ENCODE measurements at regions of chr19 and their contacts with region 1.

Region 1: DNA sequence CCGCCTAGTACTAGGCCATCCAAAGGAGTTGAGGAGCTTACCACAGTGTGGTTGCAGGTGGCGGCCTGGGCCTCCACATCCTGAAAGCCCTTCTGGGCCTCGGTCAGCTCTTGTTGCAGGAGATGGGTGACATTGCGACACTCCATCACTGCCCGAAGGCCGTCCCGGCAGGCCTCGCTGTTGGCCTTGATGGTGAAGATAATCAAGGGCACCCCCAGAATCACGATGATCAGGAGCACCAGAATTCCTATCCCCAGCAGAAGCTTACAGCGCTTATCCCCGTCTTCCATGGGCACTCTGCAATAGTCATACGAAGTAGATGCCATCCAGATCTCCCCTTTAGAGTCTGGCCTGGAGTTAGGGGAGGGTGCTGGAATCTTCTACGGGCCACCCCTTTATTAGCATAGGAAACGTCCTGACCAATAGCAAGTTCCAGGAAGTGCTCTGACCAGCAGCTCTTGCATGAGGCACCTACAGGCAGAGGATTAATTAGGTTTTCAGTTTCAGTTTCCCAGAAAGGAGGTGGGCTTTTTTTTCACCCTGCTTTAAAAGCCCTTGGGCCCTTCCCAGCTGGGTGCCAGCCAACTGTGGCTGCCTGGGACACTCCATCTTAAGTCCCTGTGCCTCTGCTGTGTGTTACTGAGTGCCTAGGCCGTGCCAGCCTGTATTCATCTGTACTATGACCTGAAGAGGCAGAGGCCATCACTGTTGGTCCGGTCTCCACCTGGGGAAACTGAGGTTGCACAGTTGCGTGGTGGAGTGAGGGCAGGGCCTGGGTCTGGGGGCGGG is at the start of gene BST2:
- DNase-seq: peak; percentile 58
- H3K4me3 Mint-ChIP-seq: peak within 1 kb of the TSS; percentile 85
- H3K27ac Mint-ChIP-seq: peak within 1 kb of the TSS; percentile 89
- H3K4me1 Mint-ChIP-seq: peaks cover 32% of the 10 kb centered on the region
- H3K27me3 Mint-ChIP-seq: no peaks in the 10 kb centered on the region
- total RNA-seq, gene BST2: 146 and 148 TPM in 2 replicates

Region 2: DNA sequence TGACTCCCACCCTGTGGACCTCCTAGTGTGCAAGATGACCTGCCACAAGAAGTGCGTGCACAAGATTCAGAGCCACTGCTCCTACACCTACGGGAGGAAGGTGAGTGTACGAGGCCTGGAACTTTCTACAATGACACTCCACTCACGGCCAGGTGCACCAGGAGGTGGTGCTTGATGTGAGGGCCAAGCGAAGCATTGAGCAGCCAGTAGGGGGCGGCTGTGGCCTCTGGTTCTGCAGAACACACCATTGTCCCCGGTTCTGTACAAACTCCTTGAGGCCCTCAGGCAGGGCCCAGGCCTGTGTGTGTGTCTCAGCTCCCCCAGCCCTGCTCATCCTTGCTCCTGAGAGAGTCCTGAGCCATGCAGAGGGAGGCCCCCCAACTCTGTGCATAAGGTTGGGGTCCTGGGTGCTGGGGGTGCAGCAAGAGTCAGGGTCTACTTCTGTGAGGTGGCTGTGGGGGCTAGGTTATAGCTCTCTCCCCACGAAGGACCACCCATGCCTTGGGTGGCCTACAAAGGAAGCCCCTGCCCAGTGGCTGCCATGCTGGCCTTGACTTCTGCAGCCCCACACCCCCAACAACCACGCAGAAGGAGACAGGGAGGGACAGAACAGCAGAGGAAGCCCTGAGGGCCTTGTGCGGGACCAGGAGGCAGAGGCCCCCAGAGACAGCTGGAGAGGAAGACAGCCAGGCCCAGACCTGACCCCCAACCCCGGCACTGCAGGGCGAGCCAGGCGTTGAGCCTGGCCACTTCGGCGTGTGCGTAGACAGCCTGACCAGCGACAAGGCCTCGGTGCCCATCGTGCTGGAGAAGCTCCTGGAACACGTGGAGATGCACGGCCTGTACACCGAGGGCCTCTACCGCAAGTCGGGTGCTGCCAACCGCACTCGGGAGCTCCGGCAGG is 200.0 kb before region 1 on chr19:
- intact Hi-C with region 1: no loop called
- DNase-seq: peak; percentile 44
- H3K4me3 Mint-ChIP-seq: no peak overlapping the region
- H3K27ac Mint-ChIP-seq: no peak overlapping the region
- H3K4me1 Mint-ChIP-seq: peaks cover 8% of the 10 kb centered on the region
- H3K27me3 Mint-ChIP-seq: no peaks in the 10 kb centered on the region

Region 3: GRCh38 chr19:17336872-17337722 is 68.3 kb before region 1 on chr19 and contains the start of gene GTPBP3:
- intact Hi-C with region 1: loop called (anchors 1 kb)
- DNase-seq: peak; percentile 95
- H3K4me3 Mint-ChIP-seq: peak within 1 kb of the TSS; percentile 87
- H3K27ac Mint-ChIP-seq: peak within 1 kb of the TSS; percentile 88
- H3K4me1 Mint-ChIP-seq: peaks cover 21% of the 10 kb centered on the region
- H3K27me3 Mint-ChIP-seq: peaks cover 2% of the 10 kb centered on the region
- total RNA-seq, gene GTPBP3: 64.2 and 72.0 TPM in 2 replicates

Region 4: GRCh38 chr19:17390665-17391370 is 14.6 kb before region 1 on chr19:
- intact Hi-C with region 1: loop called (anchors 1 kb)
- DNase-seq: peak; percentile 88
- H3K4me3 Mint-ChIP-seq: peak overlapping the region; percentile 90
- H3K27ac Mint-ChIP-seq: peak overlapping the region; percentile 29
- H3K4me1 Mint-ChIP-seq: peaks cover 20% of the 10 kb centered on the region
- H3K27me3 Mint-ChIP-seq: peaks cover 21% of the 10 kb centered on the region

Region 5: DNA sequence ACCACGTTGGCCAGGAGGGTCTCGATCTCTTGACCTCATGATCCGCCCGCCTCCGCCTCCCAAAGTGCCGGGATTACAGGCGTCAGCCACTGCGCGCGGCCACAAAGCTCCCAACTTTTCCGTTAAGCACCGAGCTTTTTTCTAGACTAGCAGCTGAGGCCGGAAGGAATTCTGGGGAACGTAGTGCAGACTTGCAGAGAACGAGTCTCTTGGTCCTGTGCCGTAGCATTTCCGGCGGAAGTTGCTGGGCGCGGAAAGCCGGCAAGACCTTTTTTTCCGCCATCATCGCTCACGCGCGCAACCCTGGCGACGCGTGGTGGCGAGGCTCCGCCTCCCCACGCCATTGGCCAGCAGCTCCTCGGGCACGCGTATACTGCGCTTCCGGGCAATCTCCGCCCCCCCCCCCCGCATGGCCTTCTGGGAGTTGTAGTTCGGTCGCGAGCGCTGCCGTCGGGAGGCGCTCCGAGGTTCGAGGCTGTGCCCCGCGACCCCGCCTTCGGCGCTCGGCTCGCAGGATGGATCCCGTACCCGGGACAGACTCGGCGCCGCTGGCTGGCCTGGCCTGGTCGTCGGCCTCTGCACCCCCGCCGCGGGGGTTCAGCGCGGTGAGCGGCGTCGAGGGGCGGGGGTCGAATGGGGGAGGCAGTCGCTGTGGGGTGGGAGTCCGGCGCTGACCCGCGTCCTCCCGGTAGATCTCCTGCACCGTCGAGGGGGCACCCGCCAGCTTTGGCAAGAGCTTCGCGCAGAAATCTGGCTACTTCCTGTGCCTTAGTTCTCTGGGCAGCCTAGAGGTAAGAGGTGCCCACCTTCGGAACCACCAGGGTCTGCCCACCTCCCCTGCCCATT is 14.4 kb after region 1 on chr19 and contains the start of gene MVB12A:
- intact Hi-C with region 1: loop called (anchors 1 kb)
- DNase-seq: peak; percentile 95
- H3K4me3 Mint-ChIP-seq: peak within 1 kb of the TSS; percentile 94
- H3K27ac Mint-ChIP-seq: peak within 1 kb of the TSS; percentile 94
- H3K4me1 Mint-ChIP-seq: peaks cover 17% of the 10 kb centered on the region
- H3K27me3 Mint-ChIP-seq: no peaks in the 10 kb centered on the region
- total RNA-seq, gene MVB12A: 40.8 and 42.7 TPM in 2 replicates

Region 6: GRCh38 chr19:17448131-17448967 is 42.9 kb after region 1 on chr19 and contains the start of gene TMEM221:
- intact Hi-C with region 1: loop called (anchors 5 kb)
- DNase-seq: peak; percentile 28
- H3K4me3 Mint-ChIP-seq: no peak within 1 kb of the TSS
- H3K27ac Mint-ChIP-seq: no peak within 1 kb of the TSS
- H3K4me1 Mint-ChIP-seq: peaks cover 13% of the 10 kb centered on the region
- H3K27me3 Mint-ChIP-seq: peaks cover 14% of the 10 kb centered on the region
- total RNA-seq, gene TMEM221: not detected in 2 replicates

Region 7: DNA sequence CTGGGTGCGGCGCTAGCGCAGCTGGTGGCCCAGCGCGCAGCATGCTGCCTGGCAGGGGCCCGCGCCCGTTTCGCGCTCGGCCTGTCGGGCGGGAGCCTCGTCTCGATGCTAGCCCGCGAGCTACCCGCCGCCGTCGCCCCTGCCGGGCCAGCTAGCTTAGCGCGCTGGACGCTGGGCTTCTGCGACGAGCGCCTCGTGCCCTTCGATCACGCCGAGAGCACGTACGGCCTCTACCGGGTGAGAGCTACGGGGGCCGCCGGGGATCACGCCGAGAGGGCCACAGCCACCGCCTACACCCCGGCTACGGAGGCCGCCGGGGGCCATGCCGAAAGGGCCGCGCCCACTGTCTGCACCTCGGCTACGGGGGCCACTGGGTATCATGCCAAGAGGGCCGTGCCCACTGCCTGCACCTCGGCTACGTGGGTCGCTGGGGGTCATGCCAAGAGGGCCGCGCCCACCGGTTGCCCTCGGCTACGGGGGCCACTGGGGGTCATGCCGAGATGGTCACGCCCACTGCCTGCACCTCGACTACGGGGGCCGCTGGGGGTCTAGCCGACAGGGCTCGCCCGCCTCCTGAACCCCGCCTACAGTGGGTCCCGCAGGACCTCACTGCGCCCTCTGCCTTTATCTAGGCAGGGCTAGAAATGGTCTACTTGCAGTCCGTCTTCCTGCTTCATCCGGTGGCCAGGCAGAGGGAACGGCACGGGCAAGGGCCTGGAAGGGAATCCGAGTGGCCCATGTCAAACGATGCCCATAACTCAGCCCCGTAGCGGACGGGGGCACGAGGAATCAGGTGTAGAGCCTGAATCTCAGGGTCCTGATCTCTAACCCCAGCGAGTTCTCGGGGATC is 106.5 kb after region 1 on chr19:
- intact Hi-C with region 1: loop called (anchors 5 kb)
- DNase-seq: peak; percentile 75
- H3K4me3 Mint-ChIP-seq: peak overlapping the region; percentile 99
- H3K27ac Mint-ChIP-seq: peak overlapping the region; percentile 79
- H3K4me1 Mint-ChIP-seq: peaks cover 28% of the 10 kb centered on the region
- H3K27me3 Mint-ChIP-seq: no peaks in the 10 kb centered on the region

Measured in activated T-helper 1 cell treated with anti-CD3 and anti-CD28 coated beads, Interleukin-12 subunit alpha, Interleukin-12 subunit beta, Interleukin-2, Interleukin-4 antibody, amounts not matched to agents 30 ng/mL and 10 ng/mL and 1 ng/mL, durations not matched to agents 14 hours and 24 hours and 36 hours (primary cell).